Esophagus muscularis mucosa (tissue), 4 donors: ENCODE measurements at regions of chr10 and their contacts with region 1.

Region 1: GRCh38 chr10:97498076-97498840 is at the start of gene MMS19:
- DNase-seq: peak; percentile 100
- H3K4me3 ChIP-seq: peak within 1 kb of the TSS; percentile 86 to 97 (median 90)
- H3K27ac ChIP-seq: peak within 1 kb of the TSS; percentile 91 to 96 (median 94)
- H3K4me1 ChIP-seq: peaks cover 52 to 62% (median 60%) of the 10 kb centered on the region in 4 donors
- H3K27me3 ChIP-seq: no peaks in the 10 kb centered on the region
- CTCF ChIP-seq: no peak
- EP300 ChIP-seq: no peak
- POLR2A ChIP-seq: peak; percentile 74
- total RNA-seq, gene MMS19: 46.9 to 51.4 (median 48.6) TPM

Region 2: DNA sequence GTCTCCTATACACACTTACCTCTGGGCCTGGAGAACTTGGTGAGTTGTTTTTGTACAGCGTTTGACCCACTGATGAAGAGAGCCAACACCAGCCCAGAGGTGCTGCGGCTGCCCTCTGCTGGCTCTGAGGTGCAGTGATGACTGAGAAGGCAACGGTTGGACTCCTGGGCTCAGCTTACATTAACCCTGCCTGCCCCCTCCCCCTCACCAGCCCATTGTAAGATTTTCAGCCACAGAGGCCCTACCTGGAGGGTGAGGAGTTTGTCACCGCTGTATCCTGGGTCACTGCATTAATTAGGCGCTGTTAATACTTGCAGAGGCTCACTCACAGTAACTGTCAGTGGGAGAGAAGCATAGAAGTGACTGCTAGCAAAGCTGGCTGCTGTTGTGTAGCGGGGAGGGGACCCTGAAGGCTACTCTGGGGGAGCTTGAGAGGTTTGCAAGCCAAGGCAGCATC is 55.3 kb after region 1 on chr10:
- intact Hi-C with region 1: loop called (anchors 5 kb)
- DNase-seq: no peak
- H3K4me3 ChIP-seq: no peak overlapping the region
- H3K27ac ChIP-seq: peak overlapping the region in 1 of 4 donors; percentile 3
- H3K4me1 ChIP-seq: peaks cover 24 to 31% (median 28%) of the 10 kb centered on the region in 4 donors
- H3K27me3 ChIP-seq: no peaks in the 10 kb centered on the region
- CTCF ChIP-seq: peak; percentile 76 to 90 (median 87)
- EP300 ChIP-seq: no peak
- POLR2A ChIP-seq: no peak

Region 3: GRCh38 chr10:98309366-98310355 is 811.4 kb after region 1 on chr10:
- intact Hi-C with region 1: no loop called
- DNase-seq: no peak
- H3K4me3 ChIP-seq: peak overlapping the region in 3 of 4 donors; percentile 18 to 37 (median 23)
- H3K27ac ChIP-seq: no peak overlapping the region
- H3K4me1 ChIP-seq: peaks cover 3 to 14% (median 11%) of the 10 kb centered on the region in 4 donors
- H3K27me3 ChIP-seq: no peaks in the 10 kb centered on the region
- CTCF ChIP-seq: peak; percentile 83 to 86 (median 85)
- EP300 ChIP-seq: no peak
- POLR2A ChIP-seq: no peak

Region 4: DNA sequence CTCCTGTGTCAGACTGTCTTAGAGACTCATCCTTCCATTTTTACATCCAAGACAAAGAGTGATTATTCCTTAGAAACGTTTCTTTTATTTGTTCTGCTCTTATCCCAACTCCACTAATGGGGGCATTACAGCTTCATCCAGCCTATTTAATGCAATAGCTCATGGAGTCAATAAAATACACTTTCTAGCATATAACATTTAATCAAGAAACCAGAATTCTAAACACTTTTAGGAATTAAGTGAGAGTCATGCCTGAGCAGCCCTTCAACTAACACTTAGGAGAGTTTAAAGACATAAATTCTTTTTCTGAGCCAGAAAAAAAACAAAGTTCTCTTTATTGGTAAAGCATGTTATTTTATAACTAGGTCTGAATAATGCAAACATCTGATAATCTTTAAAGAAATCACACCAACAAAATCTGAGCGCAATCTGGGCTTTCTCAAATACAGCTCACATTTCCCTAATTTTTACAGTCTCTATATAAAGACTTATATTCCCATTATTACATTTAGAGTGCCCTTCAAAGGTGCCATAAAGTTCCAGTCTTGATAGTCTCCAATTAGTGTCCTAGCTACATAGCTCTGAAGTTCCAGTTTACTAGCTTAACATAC is 1310.1 kb after region 1 on chr10:
- intact Hi-C with region 1: no loop called
- DNase-seq: no peak
- H3K4me3 ChIP-seq: no peak overlapping the region
- H3K27ac ChIP-seq: no peak overlapping the region
- H3K4me1 ChIP-seq: no peaks in the 10 kb centered on the region
- H3K27me3 ChIP-seq: no peaks in the 10 kb centered on the region
- CTCF ChIP-seq: no peak
- EP300 ChIP-seq: no peak
- POLR2A ChIP-seq: no peak